ENCODE measurements at regions of chr10 and their contacts with region 1.

Region 1: DNA sequence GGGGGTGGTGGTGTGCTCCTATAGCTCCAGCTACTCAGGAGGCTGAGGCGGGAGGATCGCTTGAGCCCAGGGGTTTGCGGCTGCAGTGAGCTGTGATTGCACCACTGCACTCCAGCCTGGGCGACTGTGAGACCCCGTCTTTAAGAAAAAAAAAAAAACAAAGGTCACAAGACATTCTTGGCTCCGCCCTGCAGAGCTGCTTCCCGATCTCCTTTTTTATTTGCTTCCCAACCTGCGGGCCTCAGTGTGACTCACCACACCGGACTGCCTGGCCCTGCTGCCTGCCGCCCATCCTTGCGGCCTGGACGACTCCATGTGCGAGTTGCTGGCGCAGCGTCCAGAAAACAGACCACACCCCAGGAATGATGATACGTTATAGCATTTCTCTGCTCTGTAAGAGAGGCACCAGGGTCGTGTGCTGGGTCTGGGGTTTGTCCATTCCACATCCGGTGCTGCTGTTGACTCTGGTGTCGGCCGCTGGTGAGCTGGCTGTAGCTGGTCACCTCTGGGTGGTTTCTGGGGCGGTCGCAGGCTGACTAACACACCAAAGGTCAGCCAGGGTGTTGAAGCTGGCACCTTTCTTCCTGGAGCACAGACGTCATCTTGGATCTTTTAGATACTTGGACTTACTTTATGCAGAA is 123.6 kb downstream of the TCF7L2 start:
- DNase-seq: peak; percentile 50 to 84 (median 67)
- ATAC-seq: peak; percentile 21 to 84 (median 80)
- H3K4me3 ChIP-seq: peak overlapping the region in 2 of 12 donors; percentile 8 to 28
- H3K27ac ChIP-seq: peak overlapping the region in 10 of 12 donors; percentile 11 to 66 (median 46)
- H3K4me1 ChIP-seq: peaks cover 0 to 38% (median 25%) of the 10 kb centered on the region in 12 donors
- H3K27me3 ChIP-seq: no peaks in the 10 kb centered on the region
- CTCF ChIP-seq: no peak
- POLR2A ChIP-seq: no peak

Region 2: DNA sequence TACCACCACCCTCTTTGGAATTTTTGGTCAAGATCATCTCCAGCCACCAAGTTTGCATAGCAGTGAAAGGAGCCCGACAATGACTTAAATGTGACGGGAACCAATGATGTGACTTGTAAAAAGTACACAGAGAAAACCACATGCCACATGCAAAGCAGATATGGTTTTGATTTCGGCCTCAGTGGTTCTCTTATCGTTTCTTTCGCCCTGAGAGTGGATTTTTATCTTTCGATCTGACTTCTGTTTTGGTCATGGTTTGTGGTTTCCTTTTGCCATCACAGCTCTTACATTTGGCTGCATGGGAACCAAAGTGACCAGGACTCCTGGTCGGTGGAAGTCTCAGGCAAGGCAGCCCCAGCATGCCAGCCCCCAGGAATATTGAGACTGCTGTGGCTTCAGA is 92.1 kb before region 1 on chr10:
- intact Hi-C with region 1: no loop called
- DNase-seq: no peak
- ATAC-seq: no peak
- H3K4me3 ChIP-seq: no peak overlapping the region
- H3K27ac ChIP-seq: no peak overlapping the region
- H3K4me1 ChIP-seq: peaks cover 4 to 34% (median 20%) of the 10 kb centered on the region in 12 donors
- H3K27me3 ChIP-seq: no peaks in the 10 kb centered on the region
- CTCF ChIP-seq: no peak
- POLR2A ChIP-seq: no peak

Region 3: DNA sequence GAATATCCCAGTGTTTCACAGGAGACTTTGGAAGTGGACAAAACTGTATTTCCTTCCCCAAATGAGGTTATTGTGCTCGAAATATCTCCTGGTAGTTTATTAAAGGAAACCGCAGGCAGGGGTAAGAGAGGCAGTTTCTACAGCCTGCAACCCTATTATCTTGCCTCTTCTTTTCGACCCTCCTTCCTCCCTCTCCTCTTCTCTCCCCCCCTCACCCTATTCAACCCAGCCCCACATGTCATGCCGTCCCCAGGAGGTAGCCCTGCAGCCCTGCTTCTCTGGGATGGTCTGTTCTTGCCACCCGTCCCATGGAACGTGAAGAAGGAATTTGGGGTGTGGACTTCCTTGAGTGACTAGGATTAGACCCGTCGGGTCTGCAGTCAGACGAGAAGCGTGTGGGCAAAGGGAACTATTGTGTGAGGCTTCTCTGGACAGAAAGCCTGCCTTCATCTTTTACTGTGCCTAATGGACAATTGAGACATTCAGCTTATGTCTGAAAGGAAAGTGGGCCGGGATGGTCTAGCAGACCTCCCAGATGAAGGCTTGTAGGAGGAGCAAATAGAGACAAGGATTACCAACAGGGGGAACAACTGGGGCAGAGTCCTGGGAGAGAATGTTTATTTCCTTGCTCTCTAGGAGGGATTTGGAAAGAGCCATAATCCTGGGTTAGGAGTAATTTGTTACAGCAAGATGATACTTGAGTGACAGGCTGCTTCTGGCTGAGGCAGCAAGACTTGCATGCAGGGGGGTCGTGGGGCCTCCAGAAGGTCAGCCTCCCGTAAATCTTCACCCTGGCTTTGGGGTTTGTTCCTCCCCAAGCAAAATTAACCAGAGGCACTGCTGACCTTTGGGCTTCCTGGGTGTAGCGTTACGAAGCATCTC is 45.9 kb before region 1 on chr10:
- intact Hi-C with region 1: loop called in 1 of 10 experiments (anchors 10 kb)
- DNase-seq: no peak
- ATAC-seq: peak; percentile 6 to 60 (median 42)
- H3K4me3 ChIP-seq: peak overlapping the region in 6 of 12 donors; percentile 0 to 13 (median 7)
- H3K27ac ChIP-seq: peak overlapping the region in 11 of 12 donors; percentile 7 to 56 (median 49)
- H3K4me1 ChIP-seq: peaks cover 3 to 46% (median 30%) of the 10 kb centered on the region in 12 donors
- H3K27me3 ChIP-seq: no peaks in the 10 kb centered on the region
- CTCF ChIP-seq: no peak
- POLR2A ChIP-seq: no peak

Region 4: GRCh38 chr10:113463777-113464176 is 390.1 kb after region 1 on chr10:
- intact Hi-C with region 1: no loop called
- DNase-seq: no peak
- ATAC-seq: no peak
- H3K4me3 ChIP-seq: no peak overlapping the region
- H3K27ac ChIP-seq: no peak overlapping the region
- H3K4me1 ChIP-seq: peaks cover 0 to 4% (median 0%) of the 10 kb centered on the region in 12 donors
- H3K27me3 ChIP-seq: no peaks in the 10 kb centered on the region
- CTCF ChIP-seq: no peak
- POLR2A ChIP-seq: no peak

Region 5: DNA sequence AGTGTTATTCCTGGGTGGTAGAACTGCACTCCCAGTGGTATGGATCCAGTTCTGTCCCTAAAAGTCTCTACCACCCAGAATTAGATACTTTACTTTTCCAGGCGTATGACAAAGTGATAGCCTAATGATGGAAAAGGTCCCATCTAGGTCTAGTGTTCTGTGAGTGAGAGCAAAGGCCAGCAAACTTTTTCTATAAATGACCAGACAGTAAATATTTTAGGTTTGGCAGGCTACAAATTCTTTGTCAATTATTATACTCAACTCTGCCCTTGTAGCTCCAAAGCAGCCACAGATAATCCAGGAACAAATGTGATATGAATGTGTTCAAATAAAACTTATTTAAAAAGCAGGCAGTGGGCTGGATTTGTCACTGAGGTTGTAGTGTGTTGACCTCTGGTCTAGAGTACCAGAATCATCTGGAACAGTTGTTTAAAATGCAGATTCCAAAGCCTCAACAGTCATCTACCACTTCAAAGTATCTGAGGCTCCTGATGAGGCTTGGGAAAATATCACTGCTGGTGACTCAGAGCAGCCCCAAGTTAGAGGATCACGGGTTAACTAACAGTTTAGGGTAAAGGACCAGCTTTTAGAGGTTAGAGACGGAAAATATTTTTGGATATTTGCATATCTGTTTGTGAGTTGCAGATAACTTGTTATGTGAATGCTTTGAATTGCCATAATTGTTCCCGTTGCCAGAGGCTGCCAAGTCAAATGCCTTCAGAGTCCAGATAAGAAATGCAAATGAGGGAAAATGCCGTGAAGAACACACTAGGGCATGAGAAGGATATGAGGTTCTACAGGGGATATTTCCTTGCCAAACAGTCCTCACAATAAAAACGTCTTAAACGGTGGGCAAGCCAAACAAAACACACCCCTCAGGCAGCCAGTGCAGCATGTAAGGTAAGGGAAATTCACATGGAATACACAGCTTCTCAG is 570.8 kb after region 1 on chr10:
- intact Hi-C with region 1: no loop called
- DNase-seq: no peak
- ATAC-seq: peak; percentile 32 to 45 (median 40)
- H3K4me3 ChIP-seq: no peak overlapping the region
- H3K27ac ChIP-seq: peak overlapping the region; percentile 6 to 91 (median 77)
- H3K4me1 ChIP-seq: peaks cover 3 to 83% (median 34%) of the 10 kb centered on the region in 12 donors
- H3K27me3 ChIP-seq: no peaks in the 10 kb centered on the region
- CTCF ChIP-seq: no peak
- POLR2A ChIP-seq: no peak

Region 6: DNA sequence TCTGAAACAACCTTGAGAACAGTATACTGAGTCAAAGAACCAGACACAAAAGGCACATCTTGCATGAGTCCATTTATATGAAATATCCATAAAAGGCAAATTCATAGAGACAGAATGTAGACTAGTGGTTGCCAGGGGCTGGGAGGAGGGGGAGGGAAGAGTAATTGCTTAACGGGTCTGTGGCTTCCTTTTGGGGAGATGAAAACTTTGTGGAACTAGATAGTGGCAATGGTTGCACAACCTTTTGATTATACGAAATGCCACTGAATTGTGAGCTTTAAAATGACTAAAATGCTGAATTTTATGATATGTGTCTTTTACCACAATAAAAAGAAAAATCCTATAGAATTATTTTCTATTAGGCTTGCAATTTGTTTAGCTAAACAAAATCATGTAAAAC is 986.8 kb after region 1 on chr10:
- intact Hi-C with region 1: no loop called
- DNase-seq: no peak
- ATAC-seq: no peak
- H3K4me3 ChIP-seq: no peak overlapping the region
- H3K27ac ChIP-seq: peak overlapping the region in 1 of 12 donors; percentile 4
- H3K4me1 ChIP-seq: peaks cover 0 to 55% (median 26%) of the 10 kb centered on the region in 12 donors
- H3K27me3 ChIP-seq: no peaks in the 10 kb centered on the region
- CTCF ChIP-seq: no peak
- POLR2A ChIP-seq: no peak

Measured in heart left ventricle (tissue), 16 donors.